Heart left ventricle (tissue), 16 donors: ENCODE measurements at regions of chr10 and their contacts with region 1.

Region 1: DNA sequence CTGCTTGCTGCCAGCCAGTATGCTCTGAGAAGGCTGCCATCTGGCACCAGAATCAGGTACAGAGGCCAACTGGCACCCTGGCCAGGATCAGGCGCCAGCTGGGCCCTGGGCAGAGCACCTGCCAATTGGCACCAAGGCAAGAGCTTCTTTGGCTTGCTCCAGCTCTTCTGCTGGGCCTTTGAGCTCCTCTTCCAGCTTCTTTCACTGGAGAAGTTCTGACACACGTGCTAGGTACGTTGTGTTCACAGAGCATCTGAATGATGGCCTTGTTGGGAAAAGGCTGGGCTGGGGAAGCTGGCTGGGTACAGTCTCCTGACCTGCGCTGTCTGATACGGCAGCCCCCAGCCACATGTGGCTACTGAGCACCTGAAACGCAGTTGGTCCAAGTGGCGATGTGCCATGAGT is 31.7 kb upstream of the OPALIN start:
- DNase-seq: peak; percentile 75 to 87 (median 82)
- ATAC-seq: peak; percentile 92 to 96 (median 95)
- H3K4me3 ChIP-seq: no peak overlapping the region
- H3K27ac ChIP-seq: peak overlapping the region in 9 of 12 donors; percentile 16 to 67 (median 58)
- H3K4me1 ChIP-seq: peaks cover 0 to 17% (median 5%) of the 10 kb centered on the region in 12 donors
- H3K27me3 ChIP-seq: no peaks in the 10 kb centered on the region
- CTCF ChIP-seq: no peak
- POLR2A ChIP-seq: no peak

Region 2: GRCh38 chr10:96082153-96082552 is 308.3 kb before region 1 on chr10:
- intact Hi-C with region 1: no loop called
- DNase-seq: no peak
- ATAC-seq: no peak
- H3K4me3 ChIP-seq: no peak overlapping the region
- H3K27ac ChIP-seq: no peak overlapping the region
- H3K4me1 ChIP-seq: peaks cover 0 to 10% (median 0%) of the 10 kb centered on the region in 12 donors
- H3K27me3 ChIP-seq: no peaks in the 10 kb centered on the region
- CTCF ChIP-seq: no peak
- POLR2A ChIP-seq: no peak

Region 3: GRCh38 chr10:96244354-96244753 is 146.1 kb before region 1 on chr10:
- intact Hi-C with region 1: no loop called
- DNase-seq: no peak
- ATAC-seq: no peak
- H3K4me3 ChIP-seq: no peak overlapping the region
- H3K27ac ChIP-seq: no peak overlapping the region
- H3K4me1 ChIP-seq: no peaks in the 10 kb centered on the region
- H3K27me3 ChIP-seq: peaks cover 0 to 19% (median 0%) of the 10 kb centered on the region in 9 donors
- CTCF ChIP-seq: no peak
- POLR2A ChIP-seq: no peak

Region 4: GRCh38 chr10:96513698-96514561 is 123.5 kb after region 1 on chr10 and contains the start of gene TLL2:
- intact Hi-C with region 1: loop called in 7 of 10 experiments (anchors 5 kb)
- DNase-seq: peak; percentile 88 to 94 (median 92)
- ATAC-seq: peak; percentile 96 to 97 (median 96)
- H3K4me3 ChIP-seq: peak within 1 kb of the TSS; percentile 41 to 71 (median 64)
- H3K27ac ChIP-seq: peak within 1 kb of the TSS in 11 of 12 donors; percentile 27 to 79 (median 68)
- H3K4me1 ChIP-seq: peaks cover 4 to 35% (median 16%) of the 10 kb centered on the region in 12 donors
- H3K27me3 ChIP-seq: peaks cover 0 to 33% (median 0%) of the 10 kb centered on the region in 9 donors
- CTCF ChIP-seq: peak; percentile 64 to 97 (median 76)
- POLR2A ChIP-seq: peak in 1 of 2 donors; percentile 66
- total RNA-seq, gene TLL2: 1.8 to 8.6 (median 3.6) TPM

Region 5: GRCh38 chr10:96743988-96744585 is 353.6 kb after region 1 on chr10:
- intact Hi-C with region 1: loop called in 4 of 10 experiments (anchors 5 to 10 kb)
- DNase-seq: no peak
- ATAC-seq: peak in 2 of 4 donors; percentile 42 to 56
- H3K4me3 ChIP-seq: no peak overlapping the region
- H3K27ac ChIP-seq: no peak overlapping the region
- H3K4me1 ChIP-seq: peaks cover 0 to 43% (median 0%) of the 10 kb centered on the region in 12 donors
- H3K27me3 ChIP-seq: no peaks in the 10 kb centered on the region
- CTCF ChIP-seq: peak in 11 of 12 donors; percentile 7 to 43 (median 24)
- POLR2A ChIP-seq: no peak